ENCODE measurements at regions of chr1 and their contacts with region 1.

Region 1: DNA sequence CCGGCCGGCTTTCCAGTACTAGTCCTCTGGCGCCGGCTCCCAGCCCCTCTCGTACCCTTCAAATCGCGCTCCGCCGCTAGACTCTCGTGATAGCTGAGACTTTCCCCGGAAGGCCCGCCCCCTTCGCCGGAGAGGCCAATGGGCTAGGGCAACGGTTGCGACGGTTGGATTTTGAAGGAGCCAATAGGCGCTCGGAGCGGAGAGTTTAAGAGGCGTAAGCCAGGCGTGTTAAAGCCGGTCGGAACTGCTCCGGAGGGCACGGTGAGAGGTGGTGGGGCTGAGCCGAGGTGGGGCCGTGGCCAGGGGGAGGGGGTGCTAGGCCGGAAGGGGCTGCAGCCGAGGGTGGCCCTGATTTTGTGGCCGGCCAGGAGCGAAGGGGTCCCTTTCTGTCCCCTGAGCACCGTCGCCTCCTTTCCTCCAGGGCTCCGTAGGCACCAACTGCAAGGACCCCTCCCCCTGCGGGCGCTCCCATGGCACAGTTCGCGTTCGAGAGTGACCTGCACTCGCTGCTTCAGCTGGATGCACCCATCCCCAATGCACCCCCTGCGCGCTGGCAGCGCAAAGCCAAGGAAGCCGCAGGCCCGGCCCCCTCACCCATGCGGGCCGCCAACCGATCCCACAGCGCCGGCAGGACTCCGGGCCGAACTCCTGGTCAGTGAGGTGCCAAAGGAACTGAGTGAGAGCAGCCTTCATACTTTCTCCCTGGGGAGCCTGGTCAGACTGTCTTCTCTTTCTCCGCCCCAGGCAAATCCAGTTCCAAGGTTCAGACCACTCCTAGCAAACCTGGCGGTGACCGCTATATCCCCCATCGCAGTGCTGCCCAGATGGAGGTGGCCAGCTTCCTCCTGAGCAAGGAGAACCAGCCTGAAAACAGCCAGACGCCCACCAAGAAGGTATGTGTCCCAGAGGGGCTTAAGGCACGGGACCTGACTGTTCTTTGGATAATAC is at the start of gene CDC20:
- DNase-seq: peak; percentile 93 to 99 (median 96)
- ATAC-seq: peak; percentile 98 to 100 (median 100)
- H3K4me3 ChIP-seq: peak within 1 kb of the TSS; percentile 59 to 69
- H3K4me3 Mint-ChIP-seq: peak within 1 kb of the TSS; percentile 85 to 87 (median 87)
- H3K27ac ChIP-seq: peak within 1 kb of the TSS; percentile 64
- H3K27ac Mint-ChIP-seq: peak within 1 kb of the TSS; percentile 87 to 88
- H3K4me1 ChIP-seq: peaks cover 5 to 15% of the 10 kb centered on the region in 2 experiments
- H3K4me1 Mint-ChIP-seq: peaks cover 17 to 26% (median 19%) of the 10 kb centered on the region in 3 donors
- H3K27me3 ChIP-seq: no peaks in the 10 kb centered on the region
- H3K27me3 Mint-ChIP-seq: no peaks in the 10 kb centered on the region
- total RNA-seq, gene CDC20: 0.88 to 2.8 (median 1.9) TPM

Region 2: DNA sequence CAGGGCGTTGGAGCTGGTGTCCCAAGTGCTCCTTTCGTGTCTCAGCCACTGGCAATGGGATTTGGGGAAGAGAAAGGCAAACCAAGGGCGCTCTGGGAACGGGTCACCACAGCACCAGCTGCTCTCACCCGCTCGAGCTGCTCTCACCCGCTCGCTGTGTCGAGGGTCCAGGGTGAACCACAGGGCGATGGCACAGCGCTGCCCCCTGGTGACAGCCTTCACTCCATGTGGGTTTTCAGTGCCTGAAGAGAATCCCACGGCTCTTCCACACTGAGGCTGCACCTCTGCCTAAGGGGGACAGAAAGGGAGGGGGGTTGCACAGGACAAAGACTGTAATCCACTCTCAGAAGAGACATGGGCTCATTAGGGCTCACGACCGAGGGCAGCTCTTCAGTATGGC is 611.9 kb before region 1 on chr1:
- CTCF ChIA-PET with region 1: no interaction called
- POLR2A ChIA-PET with region 1: no interaction called
- DNase-seq: peak in 29 of 35 experiments; percentile 9 to 67 (median 32)
- ATAC-seq: peak in 3 of 4 experiments; percentile 35 to 60 (median 51)
- H3K4me3 ChIP-seq: no peak overlapping the region
- H3K4me3 Mint-ChIP-seq: no peak overlapping the region
- H3K27ac ChIP-seq: no peak overlapping the region
- H3K27ac Mint-ChIP-seq: no peak overlapping the region
- H3K4me1 ChIP-seq: peaks cover 0 to 2% of the 10 kb centered on the region in 2 experiments
- H3K4me1 Mint-ChIP-seq: no peaks in the 10 kb centered on the region
- H3K27me3 ChIP-seq: no peaks in the 10 kb centered on the region
- H3K27me3 Mint-ChIP-seq: no peaks in the 10 kb centered on the region

Region 3: GRCh38 chr1:43251024-43251423 is 108.0 kb before region 1 on chr1:
- CTCF ChIA-PET with region 1: no interaction called
- POLR2A ChIA-PET with region 1: no interaction called
- DNase-seq: no peak
- ATAC-seq: no peak
- H3K4me3 ChIP-seq: no peak overlapping the region
- H3K4me3 Mint-ChIP-seq: no peak overlapping the region
- H3K27ac ChIP-seq: no peak overlapping the region
- H3K27ac Mint-ChIP-seq: no peak overlapping the region
- H3K4me1 ChIP-seq: no peaks in the 10 kb centered on the region
- H3K4me1 Mint-ChIP-seq: no peaks in the 10 kb centered on the region
- H3K27me3 ChIP-seq: peaks cover 0 to 23% of the 10 kb centered on the region in 2 experiments
- H3K27me3 Mint-ChIP-seq: peaks cover 4 to 17% of the 10 kb centered on the region in 2 donors

Region 4: GRCh38 chr1:43274125-43274803 is 84.8 kb before region 1 on chr1:
- CTCF ChIA-PET with region 1: no interaction called
- POLR2A ChIA-PET with region 1: no interaction called
- DNase-seq: peak in 33 of 35 experiments; percentile 10 to 54 (median 24)
- ATAC-seq: peak; percentile 79 to 91 (median 88)
- H3K4me3 ChIP-seq: peak overlapping the region in 1 of 2 donors; percentile 19
- H3K4me3 Mint-ChIP-seq: peak overlapping the region; percentile 11 to 64 (median 54)
- H3K27ac ChIP-seq: no peak overlapping the region
- H3K27ac Mint-ChIP-seq: peak overlapping the region; percentile 88 to 93
- H3K4me1 ChIP-seq: peaks cover 12 to 22% of the 10 kb centered on the region in 2 experiments
- H3K4me1 Mint-ChIP-seq: peaks cover 23 to 36% (median 36%) of the 10 kb centered on the region in 3 donors
- H3K27me3 ChIP-seq: peaks cover 0 to 50% of the 10 kb centered on the region in 2 experiments
- H3K27me3 Mint-ChIP-seq: peaks cover 6 to 15% of the 10 kb centered on the region in 2 donors

Region 5: GRCh38 chr1:45206808-45207624 is 1848.0 kb after region 1 on chr1:
- CTCF ChIA-PET with region 1: no interaction called
- POLR2A ChIA-PET with region 1: interaction called in 1 of 2 experiments, 12 read pairs
- DNase-seq: peak in 3 of 35 experiments; percentile 1 to 12 (median 4)
- ATAC-seq: peak in 2 of 4 experiments; percentile 14 to 36
- H3K4me3 ChIP-seq: peak overlapping the region; percentile 64 to 70
- H3K4me3 Mint-ChIP-seq: peak overlapping the region; percentile 86 to 94 (median 87)
- H3K27ac ChIP-seq: peak overlapping the region; percentile 34
- H3K27ac Mint-ChIP-seq: peak overlapping the region; percentile 83 to 87
- H3K4me1 ChIP-seq: peaks cover 7 to 17% of the 10 kb centered on the region in 2 experiments
- H3K4me1 Mint-ChIP-seq: peaks cover 33 to 38% (median 33%) of the 10 kb centered on the region in 3 donors
- H3K27me3 ChIP-seq: peaks cover 3 to 17% of the 10 kb centered on the region in 2 experiments
- H3K27me3 Mint-ChIP-seq: peaks cover 10% of the 10 kb centered on the region in 2 donors